ENCODE measurements at regions of chr19 and their contacts with region 1.

Region 1: GRCh38 chr19:23914402-23915301 is at the start of gene ZNF726:
- DNase-seq: peak; percentile 75
- ATAC-seq: peak; percentile 100
- H3K4me3 ChIP-seq: peak within 1 kb of the TSS; percentile 76 to 80
- H3K27ac ChIP-seq: peak within 1 kb of the TSS; percentile 83
- H3K4me1 ChIP-seq: 0 out of 2 replicates have a peak, but pooled peaks cover 4% of the 10 kb centered on the region
- H3K27me3 ChIP-seq: no peaks in the 10 kb centered on the region
- CTCF ChIP-seq: no peak
- total RNA-seq, gene ZNF726: 7.2 TPM

Region 2: DNA sequence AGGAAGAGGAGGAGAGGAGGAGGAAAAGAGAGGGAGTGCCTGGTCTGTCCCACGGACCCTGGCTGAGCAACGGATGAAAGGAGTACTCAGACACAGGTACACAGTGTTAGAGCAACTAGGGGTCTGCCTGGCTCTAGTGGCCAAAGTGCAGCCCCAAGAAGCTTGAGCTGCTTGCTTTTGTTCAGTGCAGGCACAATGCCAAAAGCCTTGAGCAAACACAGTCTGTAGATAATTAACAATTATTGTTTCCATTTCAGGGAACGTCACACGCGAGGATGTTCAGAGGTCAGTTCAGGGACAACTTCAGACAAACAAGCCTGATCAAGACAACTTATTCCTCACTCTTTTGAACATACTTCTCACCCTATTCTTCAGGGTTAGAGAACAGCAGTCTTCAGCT is 32.2 kb before region 1 on chr19:
- CTCF ChIA-PET with region 1: no interaction called
- POLR2A ChIA-PET with region 1: no interaction called
- in situ Hi-C with region 1: no loop called
- intact Hi-C with region 1: no loop called
- DNase-seq: no peak
- ATAC-seq: no peak
- H3K4me3 ChIP-seq: no peak overlapping the region
- H3K27ac ChIP-seq: no peak overlapping the region
- H3K4me1 ChIP-seq: no peaks in the 10 kb centered on the region
- H3K27me3 ChIP-seq: no peaks in the 10 kb centered on the region; the same call in 1 of the 2 replicates
- CTCF ChIP-seq: no peak

Region 3: GRCh38 chr19:23925285-23925684 is 10.6 kb after region 1 on chr19:
- CTCF ChIA-PET with region 1: no interaction called
- POLR2A ChIA-PET with region 1: no interaction called
- in situ Hi-C with region 1: no loop called
- intact Hi-C with region 1: no loop called
- DNase-seq: no peak
- ATAC-seq: no peak
- H3K4me3 ChIP-seq: no peak overlapping the region
- H3K27ac ChIP-seq: no peak overlapping the region
- H3K4me1 ChIP-seq: no peaks in the 10 kb centered on the region
- H3K27me3 ChIP-seq: no peaks in the 10 kb centered on the region
- CTCF ChIP-seq: no peak

Region 4: DNA sequence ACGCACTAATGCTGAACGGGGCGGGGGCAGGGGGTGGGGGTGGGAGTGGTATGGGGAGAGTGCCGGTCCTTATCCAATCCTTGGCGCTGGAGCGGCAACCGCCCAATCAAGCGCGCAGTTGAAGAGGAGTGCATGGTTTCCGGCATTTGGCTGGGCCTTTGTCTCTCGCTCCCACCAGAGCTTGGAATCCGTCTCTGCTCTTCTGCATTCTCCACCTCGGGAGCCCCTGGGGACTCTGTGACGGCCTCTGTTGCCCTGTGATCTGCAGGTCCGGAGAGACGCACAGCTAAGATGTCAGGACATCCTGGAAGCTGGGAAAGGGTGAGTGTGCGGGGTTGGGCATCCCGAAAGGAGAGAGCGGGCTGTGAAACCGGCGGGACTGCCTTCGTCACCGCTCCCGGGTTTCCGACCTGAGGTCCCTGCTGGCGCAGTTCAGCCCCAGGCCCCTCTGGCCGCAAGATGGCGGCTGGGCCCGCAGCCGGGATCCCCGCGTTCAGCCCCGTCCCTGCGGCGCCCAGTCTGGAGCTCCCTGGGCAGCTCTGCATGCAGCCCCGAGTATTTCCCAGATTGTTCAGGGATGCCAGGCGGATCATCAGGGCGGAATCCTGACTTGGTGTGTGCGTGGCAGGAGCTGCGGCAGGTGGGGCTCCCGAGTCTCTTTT is 118.8 kb after region 1 on chr19:
- CTCF ChIA-PET with region 1: no interaction called
- POLR2A ChIA-PET with region 1: no interaction called
- in situ Hi-C with region 1: no loop called
- intact Hi-C with region 1: loop called (anchors 10 kb)
- DNase-seq: no peak
- ATAC-seq: peak; percentile 98
- H3K4me3 ChIP-seq: peak overlapping the region; percentile 72 to 90
- H3K27ac ChIP-seq: peak overlapping the region; percentile 83
- H3K4me1 ChIP-seq: 0 out of 2 replicates have a peak, but pooled peaks cover 3% of the 10 kb centered on the region
- H3K27me3 ChIP-seq: no peaks in the 10 kb centered on the region
- CTCF ChIP-seq: peak; percentile 27; the same call in 1 of the 2 replicates